H1 (cell line): ENCODE measurements at regions of chr12 and their contacts with region 1.

Region 1: DNA sequence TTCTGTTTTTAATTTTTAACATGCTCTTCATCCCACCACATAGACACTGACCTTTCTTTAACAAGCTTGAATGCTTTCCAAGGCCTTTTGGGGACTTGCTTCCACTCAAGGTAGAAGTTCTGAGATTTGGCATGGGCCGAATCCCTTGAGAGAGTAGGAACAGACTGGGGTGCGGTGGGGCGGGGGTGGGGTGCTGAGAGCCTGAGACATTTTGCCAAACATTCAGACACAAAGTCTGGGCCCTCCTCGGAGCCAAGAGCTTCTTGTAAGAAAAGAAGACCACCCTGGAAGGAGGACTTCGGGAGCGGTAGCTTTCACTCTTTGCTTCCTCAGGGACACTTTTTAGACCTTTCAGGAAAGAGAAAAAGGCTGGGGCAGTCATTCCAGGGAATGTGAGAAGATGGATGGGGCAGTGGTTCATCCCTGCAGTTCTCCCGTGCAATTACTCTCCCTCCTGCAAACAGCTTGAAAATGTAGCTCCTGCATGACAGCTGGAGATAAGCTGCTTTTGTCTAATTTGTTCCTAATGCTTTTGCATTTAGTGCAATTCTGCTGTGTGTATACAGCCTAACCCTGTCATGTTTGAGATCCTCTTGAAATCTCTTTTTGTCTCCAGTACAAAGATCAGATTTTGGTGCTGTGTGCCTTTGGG is 16.3 kb upstream of the MYO1H start:
- DNase-seq: no peak
- H3K4me3 ChIP-seq: no peak overlapping the region
- H3K27ac ChIP-seq: no peak overlapping the region
- H3K4me1 ChIP-seq: no peaks in the 10 kb centered on the region
- H3K27me3 ChIP-seq: no peaks in the 10 kb centered on the region; a peak in 1 of 7 replicates
- CTCF ChIP-seq: no peak
- EP300 ChIP-seq: no peak
- POLR2A ChIP-seq: no peak
- RAD21 ChIP-seq: no peak

Region 2: DNA sequence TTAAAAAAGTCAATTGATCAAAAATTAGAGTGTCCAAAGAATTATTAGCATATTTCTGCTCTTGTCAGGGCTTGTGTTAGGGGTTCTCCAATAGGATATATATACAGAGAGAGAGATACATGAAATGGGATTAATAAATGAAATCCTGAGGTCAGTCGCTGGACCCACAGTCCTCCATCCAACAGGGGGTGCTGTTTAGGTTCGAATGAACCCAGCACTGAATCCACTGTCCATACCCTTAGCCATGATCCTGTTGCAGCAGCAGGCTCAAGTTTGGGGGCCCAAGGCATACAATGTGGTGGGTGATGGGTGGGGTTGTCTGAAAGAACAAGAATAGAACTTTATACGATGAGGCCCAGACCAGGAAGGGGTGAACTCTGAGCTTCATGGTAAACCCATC is 15.5 kb after region 1 on chr12:
- CTCF ChIA-PET with region 1: interaction called, 11 read pairs
- POLR2A ChIA-PET with region 1: no interaction called
- DNase-seq: peak in 1 of 2 experiments; percentile 63
- H3K4me3 ChIP-seq: no peak overlapping the region
- H3K27ac ChIP-seq: no peak overlapping the region
- H3K4me1 ChIP-seq: no peaks in the 10 kb centered on the region
- H3K27me3 ChIP-seq: no peaks in the 10 kb centered on the region
- CTCF ChIP-seq: peak; percentile 39 to 70 (median 57)
- EP300 ChIP-seq: no peak
- POLR2A ChIP-seq: no peak
- RAD21 ChIP-seq: peak; percentile 30 to 47

Region 3: DNA sequence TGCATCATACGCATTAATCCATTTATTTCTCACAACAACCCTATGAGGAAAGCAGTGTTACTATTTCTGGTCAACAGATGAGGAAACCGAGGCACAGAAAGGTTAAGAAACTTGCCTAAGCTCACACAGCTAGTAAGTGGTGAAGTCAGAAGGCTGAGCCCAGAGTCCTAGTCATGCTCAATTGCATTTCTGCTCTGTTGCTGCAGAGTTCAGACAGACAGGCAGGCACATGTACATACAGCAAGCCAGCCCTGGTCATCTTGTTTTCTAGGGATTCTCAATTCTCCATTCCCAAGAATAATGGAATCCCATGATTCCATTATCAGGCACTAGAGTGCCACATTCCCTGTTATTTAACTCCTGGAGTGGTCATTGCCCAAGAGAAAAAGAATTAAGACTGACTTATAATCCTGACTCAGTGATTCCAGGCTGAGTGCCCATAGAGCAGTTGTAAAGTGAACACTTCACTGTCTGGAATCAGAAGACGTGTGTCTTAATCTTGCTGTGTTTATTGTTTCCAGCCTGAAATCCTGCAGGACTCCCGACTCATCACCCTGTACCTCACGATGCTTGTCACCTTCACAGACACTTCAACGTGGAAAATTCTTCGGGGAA is 156.7 kb after region 1 on chr12:
- CTCF ChIA-PET with region 1: no interaction called
- POLR2A ChIA-PET with region 1: no interaction called
- DNase-seq: no peak
- H3K4me3 ChIP-seq: no peak overlapping the region
- H3K27ac ChIP-seq: no peak overlapping the region
- H3K4me1 ChIP-seq: no peaks in the 10 kb centered on the region
- H3K27me3 ChIP-seq: no peaks in the 10 kb centered on the region
- CTCF ChIP-seq: no peak
- EP300 ChIP-seq: no peak
- POLR2A ChIP-seq: no peak
- RAD21 ChIP-seq: no peak